ENCODE measurements at regions of chr2 and their contacts with region 1.

Region 1: GRCh38 chr2:192162392-192163042 is 32.2 kb downstream of the TMEFF2 start:
- DNase-seq: peak; percentile 27 to 72
- ATAC-seq: peak; percentile 77

Region 2: GRCh38 chr2:191552066-191552465 is 610.5 kb before region 1 on chr2:
- intact Hi-C with region 1: loop called in 1 of 2 experiments (anchors 5 kb)
- DNase-seq: no peak
- ATAC-seq: no peak

Region 3: GRCh38 chr2:191713837-191714236 is 448.7 kb before region 1 on chr2:
- intact Hi-C with region 1: no loop called
- DNase-seq: no peak
- ATAC-seq: peak; percentile 41

Region 4: GRCh38 chr2:191811807-191812602 is 350.5 kb before region 1 on chr2:
- intact Hi-C with region 1: loop called (anchors 2 to 10 kb)
- DNase-seq: peak in 1 of 2 donors; percentile 57
- ATAC-seq: peak; percentile 84

Measured in left colon (tissue), 2 donors.